Sigmoid colon (tissue), 7 donors: ENCODE measurements at regions of chr6 and their contacts with region 1.

Region 1: GRCh38 chr6:41066867-41067304 is 5.3 kb downstream of the OARD1 start:
- DNase-seq: peak; percentile 83
- H3K4me3 ChIP-seq: no peak overlapping the region
- H3K27ac ChIP-seq: no peak overlapping the region
- H3K4me1 ChIP-seq: peaks cover 0 to 15% (median 10%) of the 10 kb centered on the region in 4 donors
- H3K27me3 ChIP-seq: no peaks in the 10 kb centered on the region
- CTCF ChIP-seq: peak; percentile 65 to 81 (median 72)
- EP300 ChIP-seq: no peak
- POLR2A ChIP-seq: no peak

Region 2: GRCh38 chr6:40894962-40895799 is 171.7 kb before region 1 on chr6:
- intact Hi-C with region 1: loop called (anchors 10 kb)
- DNase-seq: peak; percentile 69
- H3K4me3 ChIP-seq: no peak overlapping the region
- H3K27ac ChIP-seq: no peak overlapping the region
- H3K4me1 ChIP-seq: peaks cover 0 to 5% (median under 1%) of the 10 kb centered on the region in 4 donors
- H3K27me3 ChIP-seq: no peaks in the 10 kb centered on the region
- CTCF ChIP-seq: peak; percentile 8 to 54 (median 47)
- EP300 ChIP-seq: no peak
- POLR2A ChIP-seq: no peak

Region 3: GRCh38 chr6:41008011-41008410 is 58.9 kb before region 1 on chr6:
- intact Hi-C with region 1: loop called (anchors 5 kb)
- DNase-seq: no peak
- H3K4me3 ChIP-seq: no peak overlapping the region
- H3K27ac ChIP-seq: no peak overlapping the region
- H3K4me1 ChIP-seq: no peaks in the 10 kb centered on the region
- H3K27me3 ChIP-seq: no peaks in the 10 kb centered on the region
- CTCF ChIP-seq: no peak
- EP300 ChIP-seq: no peak
- POLR2A ChIP-seq: no peak

Region 4: DNA sequence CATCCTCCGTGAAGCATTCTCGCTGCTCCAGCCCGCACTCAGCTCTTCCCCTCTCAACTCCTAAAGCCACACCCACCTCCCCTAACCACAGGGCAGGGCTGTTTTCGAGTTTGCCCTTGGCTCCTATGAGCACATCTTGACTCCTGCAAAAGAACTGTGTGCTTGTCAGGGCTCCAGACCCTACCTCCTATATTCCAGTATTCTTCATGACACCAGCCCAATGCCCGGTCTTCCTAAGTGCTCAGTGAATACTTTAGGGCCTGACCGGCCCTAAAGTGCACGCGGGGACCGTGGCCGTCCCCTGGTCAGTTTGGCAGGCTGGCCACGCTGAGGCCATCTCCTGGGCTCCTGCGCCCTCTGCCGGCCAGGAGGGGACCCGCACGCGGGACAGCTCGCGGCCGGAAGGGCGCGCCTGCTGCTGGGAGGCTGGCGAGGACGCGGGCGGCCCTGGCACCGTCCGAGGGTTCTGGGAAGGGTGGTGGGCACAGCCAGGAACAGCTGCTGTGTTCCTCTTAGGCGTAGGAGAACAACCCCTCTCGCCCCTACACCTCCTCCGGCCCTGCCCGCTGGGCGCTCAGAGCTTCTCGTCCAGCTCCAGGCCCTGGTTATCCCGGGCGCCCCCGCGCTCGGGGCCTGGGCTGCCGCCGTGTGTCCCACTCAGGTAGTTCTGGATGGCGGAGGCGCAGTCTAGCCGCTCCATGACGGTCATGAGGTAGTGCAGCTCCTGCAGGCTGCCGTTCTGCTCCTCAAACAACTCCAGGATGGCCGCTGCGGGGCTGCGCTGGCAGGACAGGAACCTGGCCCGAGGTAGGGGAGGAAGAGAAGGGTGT is 38.9 kb before region 1 on chr6:
- intact Hi-C with region 1: loop called (anchors 2 kb)
- DNase-seq: peak; percentile 89
- H3K4me3 ChIP-seq: peak overlapping the region; percentile 23 to 54 (median 46)
- H3K27ac ChIP-seq: peak overlapping the region; percentile 26 to 56 (median 38)
- H3K4me1 ChIP-seq: peaks cover 0 to 17% (median 10%) of the 10 kb centered on the region in 4 donors
- H3K27me3 ChIP-seq: no peaks in the 10 kb centered on the region
- CTCF ChIP-seq: peak; percentile 95 to 99 (median 98)
- EP300 ChIP-seq: no peak
- POLR2A ChIP-seq: no peak